ENCODE measurements at regions of chr14 and their contacts with region 1.

Region 1: DNA sequence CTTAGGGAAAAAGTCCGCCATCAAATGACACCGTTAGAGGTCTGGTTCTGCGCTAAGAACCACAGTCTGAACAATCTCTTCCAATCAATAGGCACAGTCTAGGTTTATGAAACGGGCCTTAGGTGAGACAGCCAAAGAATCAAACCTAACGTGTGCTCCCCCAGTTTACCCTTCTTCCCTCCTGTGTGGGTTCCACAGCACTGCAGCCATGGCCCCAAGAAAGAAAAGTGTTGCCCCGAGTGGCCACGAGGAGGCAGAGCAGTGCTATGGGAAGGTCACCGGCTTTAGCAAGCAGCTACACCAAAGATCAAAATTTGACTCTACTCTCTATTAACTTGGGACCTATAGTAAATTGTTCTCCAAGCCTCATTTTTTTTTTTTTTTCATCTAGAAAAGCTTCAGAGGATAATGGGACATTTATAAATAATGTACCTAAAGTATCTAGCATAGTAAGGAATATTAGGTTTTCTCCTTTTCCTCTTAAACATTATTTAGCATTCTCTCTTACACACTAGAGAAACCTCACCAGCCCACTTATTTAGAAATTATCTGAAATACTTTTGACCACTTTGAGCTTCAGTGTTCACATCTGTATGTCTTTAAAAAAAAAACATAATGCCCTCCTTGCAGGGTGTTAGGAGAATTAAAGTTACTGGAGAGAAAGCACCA is 70.2 kb upstream of the GPHB5 start:
- DNase-seq: peak; percentile 62 to 71
- H3K4me3 ChIP-seq: no peak overlapping the region
- H3K27ac ChIP-seq: peak overlapping the region in 2 of 3 donors; percentile 62 to 86
- H3K4me1 ChIP-seq: peaks cover 13 to 15% of the 10 kb centered on the region in 2 donors
- H3K27me3 ChIP-seq: no peaks in the 10 kb centered on the region
- CTCF ChIP-seq: peak; percentile 48 to 85 (median 78)
- POLR2A ChIP-seq: no peak

Region 2: GRCh38 chr14:63543000-63543825 is 154.3 kb after region 1 on chr14 and contains the start of gene PPP2R5E:
- intact Hi-C with region 1: loop called (anchors 5 kb)
- DNase-seq: peak; percentile 99
- H3K4me3 ChIP-seq: peak within 1 kb of the TSS; percentile 58 to 99 (median 95)
- H3K27ac ChIP-seq: peak within 1 kb of the TSS; percentile 48 to 96 (median 88)
- H3K4me1 ChIP-seq: peaks cover 15 to 17% of the 10 kb centered on the region in 2 donors
- H3K27me3 ChIP-seq: no peaks in the 10 kb centered on the region
- CTCF ChIP-seq: no peak
- POLR2A ChIP-seq: peak in 1 of 2 donors; percentile 86
- total RNA-seq, gene PPP2R5E: 30.0 to 42.3 (median 36.0) TPM

Region 3: GRCh38 chr14:63770187-63770807 is 381.4 kb after region 1 on chr14:
- intact Hi-C with region 1: loop called (anchors 5 kb)
- DNase-seq: peak; percentile 63 to 67
- H3K4me3 ChIP-seq: no peak overlapping the region
- H3K27ac ChIP-seq: no peak overlapping the region
- H3K4me1 ChIP-seq: no peaks in the 10 kb centered on the region
- H3K27me3 ChIP-seq: no peaks in the 10 kb centered on the region
- CTCF ChIP-seq: peak; percentile 17 to 71 (median 64)
- POLR2A ChIP-seq: no peak